Activated CD4-positive, alpha-beta T cell treated with anti-CD3 and anti-CD28 coated beads for 36 hours (primary cell): ENCODE measurements at regions of chr3 and their contacts with region 1.

Region 1: GRCh38 chr3:183385698-183386613 is 42.5 kb downstream of the MCF2L2 start:
- DNase-seq: peak; percentile 74
- ATAC-seq: peak; percentile 80
- H3K4me3 Mint-ChIP-seq: no peak overlapping the region
- H3K27ac Mint-ChIP-seq: no peak overlapping the region
- H3K4me1 Mint-ChIP-seq: peaks cover 14% of the 10 kb centered on the region
- H3K27me3 Mint-ChIP-seq: no peaks in the 10 kb centered on the region

Region 2: DNA sequence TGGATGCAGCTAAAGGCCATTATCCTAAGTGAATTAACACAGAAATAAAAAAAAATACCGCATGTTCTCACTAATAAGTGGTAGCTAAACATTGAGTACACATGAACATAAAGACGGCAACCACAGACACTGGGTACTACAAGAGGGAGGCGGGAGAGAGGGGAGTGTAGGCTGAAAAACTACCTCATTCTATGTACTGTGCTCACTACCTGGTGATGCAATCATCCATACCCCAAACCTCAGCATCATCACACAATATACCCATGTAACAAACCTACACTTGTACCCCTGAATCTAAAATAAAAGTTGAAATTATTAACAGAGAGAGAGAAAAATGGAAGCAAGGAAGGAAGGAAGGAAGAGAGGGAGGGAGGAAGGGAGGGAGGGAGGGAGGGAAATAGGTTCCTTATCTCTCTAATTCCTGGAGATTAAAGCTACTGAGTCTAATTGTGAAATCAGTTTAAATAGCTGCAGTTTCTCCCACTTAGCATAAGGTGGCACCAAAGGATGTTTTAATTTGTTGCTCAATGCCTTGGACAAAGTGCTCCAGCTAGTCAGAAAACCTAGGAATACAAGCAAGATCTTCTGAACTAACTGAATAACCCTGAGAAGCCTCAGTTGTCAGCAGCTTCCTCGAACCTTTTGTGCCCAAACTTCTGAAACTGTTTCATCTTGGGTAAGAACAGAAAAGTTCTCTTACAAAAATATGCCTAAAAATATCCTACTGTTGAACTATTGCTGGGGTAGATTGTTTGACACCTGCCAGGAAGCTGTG is 672.0 kb before region 1 on chr3:
- CTCF ChIA-PET with region 1: no interaction called
- POLR2A ChIA-PET with region 1: no interaction called
- intact Hi-C with region 1: loop called (anchors 2 to 10 kb)
- DNase-seq: no peak
- ATAC-seq: peak; percentile 66
- H3K4me3 Mint-ChIP-seq: no peak overlapping the region
- H3K27ac Mint-ChIP-seq: no peak overlapping the region
- H3K4me1 Mint-ChIP-seq: peaks cover 8% of the 10 kb centered on the region
- H3K27me3 Mint-ChIP-seq: peaks cover 3% of the 10 kb centered on the region

Region 3: DNA sequence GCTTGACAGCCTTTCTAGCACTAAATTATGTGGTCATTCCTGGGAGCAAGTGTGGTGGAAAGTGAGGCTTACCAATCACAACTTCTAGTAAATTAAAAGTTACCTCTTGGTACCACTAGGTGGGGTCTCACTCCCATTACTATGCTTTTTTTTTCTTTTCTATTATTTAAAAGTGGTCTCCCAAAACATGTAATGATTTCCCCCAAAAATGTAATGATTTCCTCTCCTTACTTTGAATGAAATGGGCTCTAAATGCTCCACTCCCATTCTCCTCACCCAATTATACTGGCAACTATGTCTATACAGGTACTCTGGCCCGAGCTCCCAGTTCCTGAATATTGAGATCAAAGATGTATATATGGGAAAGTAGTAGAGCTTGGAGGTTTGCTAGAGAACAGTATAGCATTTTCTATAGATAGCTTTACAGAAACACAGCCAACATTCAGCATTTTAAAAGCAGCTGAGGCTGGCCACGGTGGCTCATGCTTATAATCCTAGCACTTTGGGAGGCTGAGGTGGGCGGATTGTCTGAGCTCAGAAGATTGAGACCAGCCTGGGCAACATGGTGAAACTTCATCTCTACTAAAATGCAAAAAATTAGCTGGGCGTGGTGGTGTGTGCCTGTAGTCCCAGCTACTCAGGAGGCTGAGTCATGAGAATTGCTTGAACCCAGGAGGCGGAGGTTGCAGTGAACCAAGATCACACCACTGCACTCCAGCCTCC is 476.5 kb before region 1 on chr3:
- CTCF ChIA-PET with region 1: no interaction called
- POLR2A ChIA-PET with region 1: no interaction called
- intact Hi-C with region 1: loop called (anchors 5 kb)
- DNase-seq: no peak
- ATAC-seq: peak; percentile 57
- H3K4me3 Mint-ChIP-seq: no peak overlapping the region
- H3K27ac Mint-ChIP-seq: no peak overlapping the region
- H3K4me1 Mint-ChIP-seq: peaks cover 39% of the 10 kb centered on the region
- H3K27me3 Mint-ChIP-seq: no peaks in the 10 kb centered on the region

Region 4: DNA sequence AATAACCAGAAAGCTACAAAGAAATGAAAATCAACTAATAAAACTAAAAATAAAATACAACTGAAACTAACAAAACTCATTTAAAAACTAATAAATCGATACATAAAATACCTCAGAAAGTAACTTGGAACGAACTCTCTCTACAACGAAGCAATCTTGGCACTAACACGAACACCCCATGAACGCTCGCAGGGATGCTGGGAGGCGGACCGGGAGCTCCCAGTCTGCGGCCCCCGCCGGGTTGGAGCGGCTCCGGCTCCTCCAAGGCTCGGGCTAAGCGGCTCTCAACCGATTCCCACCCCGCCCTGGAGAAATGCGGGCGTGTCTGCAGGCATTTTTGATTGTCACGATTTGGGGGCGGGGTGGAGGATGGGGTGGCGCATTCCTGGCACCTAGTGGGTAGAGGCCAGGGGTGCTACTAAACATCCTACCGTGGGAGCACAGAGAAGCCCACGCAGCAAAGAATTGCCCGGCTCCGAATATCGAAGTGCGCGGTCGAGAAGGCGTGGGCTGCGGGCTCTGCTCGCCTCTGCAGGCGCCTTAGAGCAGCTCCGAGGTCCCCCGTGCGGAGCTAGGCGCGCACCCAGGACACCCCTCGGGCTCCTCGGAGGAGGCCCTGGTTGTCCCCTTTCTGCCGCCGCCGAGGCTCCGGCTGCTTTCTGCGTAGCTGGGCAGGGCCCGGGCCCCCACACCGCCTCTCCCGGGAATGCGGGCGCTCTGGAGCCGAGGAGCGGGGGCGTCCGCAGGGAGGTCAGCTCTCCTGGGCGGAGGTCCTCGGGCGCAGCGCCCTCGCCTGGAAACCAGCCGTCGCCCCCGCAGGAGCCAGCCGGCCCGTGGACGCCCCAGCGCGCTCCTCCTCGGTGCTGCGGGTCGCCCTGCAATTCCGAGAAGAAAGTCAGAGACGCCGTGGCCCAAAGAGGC is 207.1 kb before region 1 on chr3:
- CTCF ChIA-PET with region 1: interaction called, 257 read pairs
- POLR2A ChIA-PET with region 1: no interaction called
- intact Hi-C with region 1: loop called (anchors 1 kb)
- DNase-seq: peak; percentile 82
- ATAC-seq: peak; percentile 82
- H3K4me3 Mint-ChIP-seq: peak overlapping the region; percentile 70
- H3K27ac Mint-ChIP-seq: no peak overlapping the region
- H3K4me1 Mint-ChIP-seq: peaks cover 7% of the 10 kb centered on the region
- H3K27me3 Mint-ChIP-seq: peaks cover 25% of the 10 kb centered on the region

Region 5: DNA sequence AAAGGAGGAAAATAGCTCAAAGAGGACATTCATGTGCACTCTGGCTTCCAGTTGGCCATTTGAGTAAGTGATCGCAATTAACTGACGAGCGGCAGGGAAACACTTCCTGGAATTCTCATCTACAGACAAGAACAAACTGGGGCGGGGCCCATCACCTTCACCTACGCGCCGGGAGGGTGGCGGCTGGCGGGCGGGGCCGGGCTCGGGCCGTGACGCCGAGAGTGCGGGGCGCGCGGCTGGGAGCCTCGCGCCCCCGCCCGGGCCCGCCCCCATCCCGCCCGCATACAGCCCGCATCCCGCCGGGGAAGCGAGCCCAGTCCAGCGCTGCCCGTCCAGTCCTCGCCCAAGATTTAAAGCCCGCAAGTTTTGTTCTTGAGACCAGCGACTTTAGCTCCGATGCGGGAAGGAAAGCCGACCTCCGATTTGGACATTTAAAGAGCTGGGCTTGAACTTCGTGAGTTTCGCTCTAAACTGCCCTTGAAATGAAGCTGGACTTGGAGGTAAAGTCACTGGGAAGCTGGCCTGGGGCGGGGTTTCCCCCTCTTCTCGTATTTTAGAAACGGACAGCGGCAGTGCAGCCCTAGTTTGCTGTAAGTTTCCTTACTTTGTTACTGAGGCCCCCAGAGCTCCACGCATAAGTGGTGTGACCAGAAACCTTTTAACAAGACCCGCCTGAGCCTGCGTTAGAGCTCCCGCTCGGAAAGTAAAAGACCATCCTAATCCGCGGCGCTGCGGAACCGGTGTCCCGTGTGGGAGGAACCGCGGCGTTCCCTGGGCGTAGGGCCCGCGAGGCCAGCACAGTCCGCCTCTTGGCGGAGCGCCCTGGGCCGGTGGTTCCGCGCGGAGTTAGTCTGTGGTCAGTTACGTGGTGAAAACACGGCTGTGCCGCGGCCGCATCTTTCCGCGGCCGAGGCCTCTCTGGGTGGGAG is 132.7 kb before region 1 on chr3 and contains the start of gene B3GNT5:
- CTCF ChIA-PET with region 1: interaction called, 5 read pairs
- POLR2A ChIA-PET with region 1: no interaction called
- intact Hi-C with region 1: loop called (anchors 1 to 2 kb)
- DNase-seq: peak; percentile 76
- ATAC-seq: peak; percentile 56
- H3K4me3 Mint-ChIP-seq: peak within 1 kb of the TSS; percentile 77
- H3K27ac Mint-ChIP-seq: peak within 1 kb of the TSS; percentile 79
- H3K4me1 Mint-ChIP-seq: peaks cover 29% of the 10 kb centered on the region
- H3K27me3 Mint-ChIP-seq: peaks cover 14% of the 10 kb centered on the region
- total RNA-seq, gene B3GNT5: 20.2 to 22.8 TPM

Region 6: DNA sequence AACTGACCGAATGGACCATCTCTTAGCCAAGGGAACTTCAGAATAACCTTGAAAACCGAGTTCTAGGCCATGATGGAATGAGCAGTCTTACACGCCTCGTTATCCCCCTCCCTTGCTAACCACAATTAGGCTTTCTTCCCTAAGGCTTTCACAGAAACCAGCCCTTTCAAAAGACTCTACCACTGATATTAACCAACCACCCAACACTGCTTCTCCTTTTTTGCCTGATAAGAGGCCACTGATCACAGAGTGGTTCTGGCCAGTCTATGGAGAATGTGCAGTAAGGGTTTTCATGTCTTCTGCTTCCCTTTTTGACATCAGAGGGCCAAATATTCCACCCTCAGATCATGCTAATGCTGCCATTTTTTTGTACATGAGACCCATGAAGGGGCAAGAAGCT is 16.8 kb before region 1 on chr3:
- CTCF ChIA-PET with region 1: interaction called, 14 read pairs
- POLR2A ChIA-PET with region 1: interaction called, 3 read pairs
- intact Hi-C with region 1: no loop called
- DNase-seq: no peak
- ATAC-seq: no peak
- H3K4me3 Mint-ChIP-seq: no peak overlapping the region
- H3K27ac Mint-ChIP-seq: no peak overlapping the region
- H3K4me1 Mint-ChIP-seq: peaks cover 34% of the 10 kb centered on the region
- H3K27me3 Mint-ChIP-seq: no peaks in the 10 kb centered on the region

Region 7: GRCh38 chr3:183766745-183767606 is 381.0 kb after region 1 on chr3:
- CTCF ChIA-PET with region 1: no interaction called
- POLR2A ChIA-PET with region 1: no interaction called
- intact Hi-C with region 1: loop called in 1 of 2 experiments (anchors 5 kb)
- DNase-seq: peak; percentile 85
- ATAC-seq: peak; percentile 95
- H3K4me3 Mint-ChIP-seq: no peak overlapping the region
- H3K27ac Mint-ChIP-seq: no peak overlapping the region
- H3K4me1 Mint-ChIP-seq: peaks cover 9% of the 10 kb centered on the region
- H3K27me3 Mint-ChIP-seq: no peaks in the 10 kb centered on the region